HEK293 (cell line): ENCODE measurements at regions of chr22 and their contacts with region 1.

Region 1: GRCh38 chr22:38872172-38872830 is at the start of gene CBX6:
- H3K4me3 ChIP-seq: peak within 1 kb of the TSS; percentile 75
- H3K27ac ChIP-seq: peak within 1 kb of the TSS; percentile 84
- H3K4me1 ChIP-seq: peaks cover 15% of the 10 kb centered on the region
- CTCF ChIP-seq: no peak

Region 2: DNA sequence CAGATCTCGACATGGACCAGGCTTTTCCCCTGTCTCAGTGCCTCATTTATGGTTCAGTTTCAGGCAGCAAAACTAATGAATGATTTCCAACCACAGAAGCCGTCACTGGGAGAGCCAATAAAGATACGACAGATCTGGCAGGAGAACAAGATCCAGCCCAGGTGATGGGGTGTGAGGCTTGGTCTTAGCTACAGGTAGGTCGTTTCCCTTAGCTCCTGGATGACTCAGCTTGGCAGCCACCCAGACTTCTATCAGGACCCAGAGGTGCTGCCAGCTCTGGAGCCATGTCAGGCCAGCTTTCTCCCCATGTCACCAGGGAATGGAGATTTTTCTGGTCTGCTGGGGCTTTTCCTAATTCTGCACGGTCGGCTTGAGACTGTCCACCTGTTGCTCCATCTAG is 48.8 kb after region 1 on chr22:
- CTCF ChIA-PET with region 1: interaction called, 24 read pairs
- POLR2A ChIA-PET with region 1: interaction called, 6 read pairs
- H3K4me3 ChIP-seq: no peak overlapping the region
- H3K27ac ChIP-seq: no peak overlapping the region
- H3K4me1 ChIP-seq: peaks cover 17% of the 10 kb centered on the region
- CTCF ChIP-seq: no peak

Region 3: DNA sequence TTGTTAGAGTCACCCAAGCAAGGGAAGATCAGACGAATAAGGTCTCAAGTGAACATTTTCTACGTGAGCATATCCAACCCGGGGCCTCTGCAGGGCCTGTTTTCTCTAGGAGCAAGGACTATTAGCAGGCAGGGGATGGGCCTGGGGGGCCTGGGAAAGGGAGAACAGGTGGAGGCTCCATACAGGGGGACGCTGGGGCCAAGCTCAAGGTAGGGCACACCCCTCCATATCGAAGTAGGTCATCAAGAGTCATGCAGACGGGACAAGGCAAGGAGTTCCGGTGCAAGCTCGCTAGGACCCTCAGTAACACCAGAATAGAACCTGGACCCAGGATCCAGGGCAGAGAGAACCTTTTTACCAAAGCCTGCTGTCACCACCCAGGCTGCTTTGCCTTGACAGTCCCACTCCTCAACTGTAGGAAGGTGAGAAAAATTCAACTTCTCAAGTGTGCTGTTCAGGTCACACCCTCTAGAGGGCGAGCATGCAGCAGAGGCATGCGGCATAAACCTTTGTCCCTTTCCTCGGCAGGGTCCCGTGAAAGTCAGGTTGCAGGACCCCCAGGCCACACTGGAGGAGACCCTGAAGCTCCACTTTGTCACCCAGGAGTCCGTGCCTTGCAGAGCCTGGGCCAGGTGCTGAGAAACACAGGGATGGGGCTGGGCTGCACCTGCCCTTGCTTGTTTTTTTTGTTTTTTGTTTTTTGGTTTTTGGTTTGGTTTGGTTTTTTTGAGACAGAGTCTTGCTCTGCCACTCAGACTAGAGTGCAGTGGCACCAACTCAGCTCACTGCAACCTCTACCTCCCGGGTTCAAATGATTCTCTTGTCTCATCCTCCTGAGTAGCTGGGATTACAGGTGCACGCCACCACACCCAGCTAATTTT is 101.2 kb after region 1 on chr22:
- CTCF ChIA-PET with region 1: interaction called, 35 read pairs
- POLR2A ChIA-PET with region 1: no interaction called
- H3K4me3 ChIP-seq: no peak overlapping the region
- H3K27ac ChIP-seq: no peak overlapping the region
- H3K4me1 ChIP-seq: no peaks in the 10 kb centered on the region
- CTCF ChIP-seq: peak; percentile 77

Region 4: DNA sequence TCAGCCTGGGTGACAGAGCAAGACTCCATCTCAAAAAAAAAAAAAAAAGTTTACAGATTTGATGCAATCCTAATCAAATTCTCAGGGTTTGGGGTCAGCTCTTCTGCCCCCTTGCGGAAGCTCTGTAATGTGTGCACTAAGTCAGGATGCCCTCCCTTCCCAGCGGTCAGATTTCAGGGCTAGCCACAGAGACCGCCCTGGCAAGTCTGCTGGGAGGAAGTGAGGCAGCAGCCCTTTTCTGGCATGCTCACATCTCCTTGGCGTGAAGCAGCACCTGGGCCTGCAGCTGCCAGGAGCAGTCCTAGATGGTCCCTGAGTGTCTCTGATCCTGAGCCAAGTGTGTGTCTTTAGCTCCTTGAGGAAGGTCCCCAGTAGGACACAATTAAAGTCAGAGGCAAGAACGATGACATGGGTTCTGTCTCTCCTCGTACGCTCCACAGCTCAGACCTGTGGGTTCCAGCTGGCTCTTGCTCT is 130.9 kb after region 1 on chr22:
- CTCF ChIA-PET with region 1: interaction called, 128 read pairs
- POLR2A ChIA-PET with region 1: interaction called, 8 read pairs
- H3K4me3 ChIP-seq: no peak overlapping the region
- H3K27ac ChIP-seq: no peak overlapping the region
- H3K4me1 ChIP-seq: no peaks in the 10 kb centered on the region
- CTCF ChIP-seq: peak; percentile 76